SK-N-SH (cell line): ENCODE measurements at regions of chr2 and their contacts with region 1.

Region 1: DNA sequence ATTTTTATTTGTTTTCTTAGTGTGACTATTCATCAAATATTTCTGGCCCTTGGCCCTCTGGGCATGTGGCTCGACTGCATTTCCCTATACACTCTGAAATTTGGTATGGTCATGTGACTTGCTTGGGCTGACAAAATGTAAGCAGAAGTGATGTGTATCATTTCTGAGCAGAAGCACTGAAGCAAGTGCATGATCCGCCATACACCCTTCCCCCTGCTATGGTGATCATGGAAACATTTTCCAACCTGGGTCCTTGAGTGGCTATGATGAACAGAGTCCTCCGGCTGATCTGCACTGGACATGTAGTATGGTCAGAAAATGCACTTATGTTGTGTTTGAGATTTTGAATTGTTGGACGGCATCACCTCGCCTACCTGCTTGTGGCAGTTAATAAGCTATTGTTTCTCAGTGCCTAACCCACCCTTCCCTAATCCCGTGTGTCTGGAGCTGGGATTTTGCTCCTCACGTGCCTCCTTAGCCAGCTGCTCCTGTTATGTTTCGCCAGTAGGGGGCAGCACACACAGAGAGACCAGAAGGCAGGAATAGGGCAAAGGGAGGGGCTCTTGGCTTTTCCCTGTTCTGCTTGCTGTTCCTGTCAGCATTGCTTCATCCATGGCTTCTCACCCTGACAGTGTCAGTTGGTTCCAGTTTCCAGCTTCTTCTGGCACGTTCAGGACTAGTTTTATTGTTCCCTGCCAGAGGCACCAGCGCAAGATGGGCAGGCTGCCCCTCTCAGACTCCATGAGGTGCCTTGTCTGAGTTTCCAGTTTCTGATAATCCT is 207.3 kb downstream of the ARL6IP6 start:
- DNase-seq: peak; percentile 51
- H3K4me3 ChIP-seq: peak overlapping the region in 1 of 2 experiments; percentile 49; a peak in 1 of 4 replicates
- H3K27ac ChIP-seq: no peak overlapping the region
- H3K4me1 ChIP-seq: no peaks in the 10 kb centered on the region; a peak in 1 of 4 replicates
- H3K27me3 ChIP-seq: no peaks in the 10 kb centered on the region; the same call in 1 of the 2 replicates
- CTCF ChIP-seq: peak; percentile 79
- EP300 ChIP-seq: no peak
- RAD21 ChIP-seq: peak; percentile 67

Region 2: DNA sequence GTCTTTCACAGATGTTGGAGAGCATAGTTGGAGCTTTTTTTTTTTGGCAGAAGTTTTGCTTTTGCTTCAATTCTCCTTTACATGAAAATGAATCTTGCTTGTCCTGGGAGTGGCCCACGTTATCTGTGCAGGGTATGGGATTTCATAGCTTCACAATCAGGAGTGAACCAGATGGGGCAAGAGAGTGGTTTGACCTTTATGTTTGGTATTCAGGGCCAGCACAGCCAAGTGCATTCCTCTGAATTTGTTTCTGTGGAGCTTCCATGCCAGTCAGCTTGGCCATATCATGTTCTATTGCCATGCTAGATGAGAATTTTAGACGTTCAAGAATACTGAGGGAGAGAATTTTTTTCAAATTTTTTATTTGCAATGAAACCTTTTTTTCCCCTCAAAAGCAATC is 325.0 kb before region 1 on chr2:
- CTCF ChIA-PET with region 1: no interaction called
- POLR2A ChIA-PET with region 1: no interaction called
- DNase-seq: no peak
- H3K4me3 ChIP-seq: no peak overlapping the region
- H3K27ac ChIP-seq: no peak overlapping the region
- H3K4me1 ChIP-seq: no peaks in the 10 kb centered on the region
- H3K27me3 ChIP-seq: no peaks in the 10 kb centered on the region
- CTCF ChIP-seq: no peak
- EP300 ChIP-seq: no peak
- RAD21 ChIP-seq: no peak

Region 3: DNA sequence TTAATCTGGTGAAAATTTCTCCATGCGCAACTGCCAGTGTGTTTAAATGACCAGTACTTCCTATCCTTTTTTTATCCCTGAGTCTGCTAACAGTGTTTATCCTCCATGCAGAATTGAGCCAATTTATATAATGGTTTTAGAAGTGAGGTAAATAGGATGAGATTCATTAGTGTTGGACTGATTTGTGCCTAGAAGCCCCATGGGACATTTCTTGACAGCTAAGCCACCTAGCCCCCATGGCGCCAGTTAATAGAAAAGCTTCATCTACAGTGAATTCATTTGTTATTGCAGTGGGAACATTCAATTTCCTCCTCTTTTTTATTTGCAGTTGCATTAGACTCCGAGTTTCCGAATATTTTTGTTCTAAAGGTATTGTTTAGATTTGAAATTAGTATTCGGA is 31.7 kb before region 1 on chr2:
- CTCF ChIA-PET with region 1: interaction called, 11 read pairs
- POLR2A ChIA-PET with region 1: no interaction called
- DNase-seq: no peak
- H3K4me3 ChIP-seq: no peak overlapping the region
- H3K27ac ChIP-seq: no peak overlapping the region
- H3K4me1 ChIP-seq: no peaks in the 10 kb centered on the region
- H3K27me3 ChIP-seq: no peaks in the 10 kb centered on the region; the same call in 1 of the 2 replicates
- CTCF ChIP-seq: no peak
- EP300 ChIP-seq: no peak
- RAD21 ChIP-seq: no peak

Region 4: GRCh38 chr2:153478334-153479261 is 552.9 kb after region 1 on chr2 and contains the start of gene RPRM:
- CTCF ChIA-PET with region 1: interaction called, 11 read pairs
- POLR2A ChIA-PET with region 1: no interaction called
- DNase-seq: peak; percentile 88
- H3K4me3 ChIP-seq: peak within 1 kb of the TSS; percentile 45 to 63
- H3K27ac ChIP-seq: no peak within 1 kb of the TSS
- H3K4me1 ChIP-seq: peaks cover 0 to 10% of the 10 kb centered on the region in 2 experiments; a peak in 1 of 4 replicates
- H3K27me3 ChIP-seq: peaks cover 31% of the 10 kb centered on the region
- CTCF ChIP-seq: peak; percentile 91
- EP300 ChIP-seq: no peak
- RAD21 ChIP-seq: peak; percentile 74
- polyA plus RNA-seq, gene RPRM: 0.03 and 0.15 TPM in 2 replicates